CD4-positive, alpha-beta memory T cell (primary cell): ENCODE measurements at regions of chr12 and their contacts with region 1.

Region 1: GRCh38 chr12:55188974-55189556 is 31.8 kb upstream of the OR10A7 start:
- DNase-seq: peak; percentile 51 to 63 (median 55)
- H3K4me3 ChIP-seq: no peak overlapping the region
- H3K4me3 Mint-ChIP-seq: no peak overlapping the region
- H3K27ac ChIP-seq: no peak overlapping the region
- H3K27ac Mint-ChIP-seq: no peak overlapping the region
- H3K4me1 ChIP-seq: no peaks in the 10 kb centered on the region
- H3K4me1 Mint-ChIP-seq: no peaks in the 10 kb centered on the region
- H3K27me3 ChIP-seq: peaks cover 6% of the 10 kb centered on the region
- H3K27me3 Mint-ChIP-seq: peaks cover 15 to 26% of the 10 kb centered on the region in 2 donors

Region 2: DNA sequence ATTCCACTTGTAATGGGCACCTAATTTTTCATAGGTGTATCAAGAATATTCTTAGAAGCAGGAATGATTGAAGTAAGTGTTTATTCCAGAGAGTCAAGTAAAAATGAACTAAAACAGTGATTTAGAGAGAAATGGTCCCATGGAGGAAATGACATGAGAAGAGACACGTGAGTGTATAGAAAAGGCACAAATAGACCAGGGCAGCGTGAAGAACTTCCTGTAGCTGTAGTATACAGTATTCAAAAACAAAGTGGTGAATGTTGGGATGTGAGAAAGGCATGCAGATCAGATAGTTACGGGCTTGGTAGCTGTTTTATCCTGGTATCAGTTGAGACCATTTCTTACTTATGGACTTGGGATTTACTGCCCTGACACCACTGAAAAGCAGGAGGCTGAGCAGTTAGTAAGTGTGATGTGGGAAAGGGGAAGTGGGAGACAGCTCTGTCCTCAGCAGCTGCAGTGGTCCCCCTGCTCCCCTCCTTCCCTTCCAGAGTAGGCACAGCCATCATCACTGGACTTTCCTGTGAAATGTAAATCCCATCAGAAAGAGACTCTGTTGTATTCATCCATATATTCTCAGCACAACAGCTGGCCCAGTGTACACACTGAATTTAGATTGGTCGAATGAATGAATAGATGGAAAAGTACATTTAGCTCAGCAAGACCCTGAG is 187.7 kb before region 1 on chr12:
- CTCF ChIA-PET with region 1: no interaction called
- POLR2A ChIA-PET with region 1: no interaction called
- intact Hi-C with region 1: no loop called
- DNase-seq: no peak
- H3K4me3 ChIP-seq: no peak overlapping the region
- H3K4me3 Mint-ChIP-seq: peak overlapping the region in 1 of 8 donors; percentile 24
- H3K27ac ChIP-seq: no peak overlapping the region
- H3K27ac Mint-ChIP-seq: peak overlapping the region in 4 of 7 donors; percentile 10 to 81 (median 22)
- H3K4me1 ChIP-seq: peaks cover 6% of the 10 kb centered on the region
- H3K4me1 Mint-ChIP-seq: peaks cover 6 to 17% (median 8%) of the 10 kb centered on the region in 4 donors
- H3K27me3 ChIP-seq: no peaks in the 10 kb centered on the region
- H3K27me3 Mint-ChIP-seq: no peaks in the 10 kb centered on the region

Region 3: GRCh38 chr12:55132816-55133215 is 56.2 kb before region 1 on chr12:
- CTCF ChIA-PET with region 1: no interaction called
- POLR2A ChIA-PET with region 1: no interaction called
- intact Hi-C with region 1: no loop called
- DNase-seq: no peak
- H3K4me3 ChIP-seq: no peak overlapping the region
- H3K4me3 Mint-ChIP-seq: no peak overlapping the region
- H3K27ac ChIP-seq: no peak overlapping the region
- H3K27ac Mint-ChIP-seq: no peak overlapping the region
- H3K4me1 ChIP-seq: no peaks in the 10 kb centered on the region
- H3K4me1 Mint-ChIP-seq: no peaks in the 10 kb centered on the region
- H3K27me3 ChIP-seq: peaks cover 11% of the 10 kb centered on the region
- H3K27me3 Mint-ChIP-seq: peaks cover 29 to 36% of the 10 kb centered on the region in 2 donors

Region 4: DNA sequence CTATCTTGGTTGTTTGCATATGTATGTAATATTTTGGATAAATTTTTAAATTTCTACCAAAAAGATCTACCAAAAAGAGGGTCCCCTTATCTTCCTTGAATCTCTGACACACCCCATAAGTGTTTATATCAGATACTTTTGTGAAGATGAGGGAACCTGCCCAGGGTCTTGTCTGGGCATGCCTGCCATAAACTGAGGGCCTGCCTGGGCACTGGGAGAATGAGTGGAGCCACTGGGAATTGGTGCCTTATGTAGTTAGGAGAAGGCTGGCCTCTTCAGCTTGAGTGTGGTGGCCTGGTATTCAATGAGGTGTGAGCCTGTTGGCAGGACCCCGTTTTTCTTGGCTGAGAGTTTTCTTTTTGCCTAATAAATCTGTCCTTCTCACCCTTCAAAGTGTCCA is 16.4 kb before region 1 on chr12:
- CTCF ChIA-PET with region 1: no interaction called
- POLR2A ChIA-PET with region 1: no interaction called
- intact Hi-C with region 1: no loop called
- DNase-seq: no peak
- H3K4me3 ChIP-seq: no peak overlapping the region
- H3K4me3 Mint-ChIP-seq: no peak overlapping the region
- H3K27ac ChIP-seq: no peak overlapping the region
- H3K27ac Mint-ChIP-seq: no peak overlapping the region
- H3K4me1 ChIP-seq: no peaks in the 10 kb centered on the region
- H3K4me1 Mint-ChIP-seq: no peaks in the 10 kb centered on the region
- H3K27me3 ChIP-seq: no peaks in the 10 kb centered on the region
- H3K27me3 Mint-ChIP-seq: peaks cover 7 to 10% of the 10 kb centered on the region in 2 donors

Region 5: DNA sequence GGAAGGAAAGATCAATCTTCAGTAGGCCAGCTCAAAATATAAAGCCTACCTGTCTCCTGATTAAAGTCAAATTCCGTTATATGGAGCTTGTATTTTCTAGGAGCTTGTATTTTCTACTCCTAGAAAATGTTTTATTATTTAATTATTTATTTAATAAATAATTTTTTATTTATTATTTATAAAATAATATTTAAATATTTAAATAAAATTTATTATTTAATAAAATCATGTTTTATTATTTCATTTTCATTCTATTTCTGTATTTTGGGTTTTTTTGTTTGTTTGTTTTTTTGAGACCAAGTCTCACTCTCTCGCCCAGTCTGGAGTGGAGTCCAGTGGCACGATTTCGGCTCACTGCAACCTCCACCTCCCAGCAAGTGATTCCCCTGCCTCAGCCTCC is 183.5 kb after region 1 on chr12:
- CTCF ChIA-PET with region 1: no interaction called
- POLR2A ChIA-PET with region 1: no interaction called
- intact Hi-C with region 1: no loop called
- DNase-seq: no peak
- H3K4me3 ChIP-seq: no peak overlapping the region
- H3K4me3 Mint-ChIP-seq: no peak overlapping the region
- H3K27ac ChIP-seq: no peak overlapping the region
- H3K27ac Mint-ChIP-seq: no peak overlapping the region
- H3K4me1 ChIP-seq: no peaks in the 10 kb centered on the region
- H3K4me1 Mint-ChIP-seq: no peaks in the 10 kb centered on the region
- H3K27me3 ChIP-seq: no peaks in the 10 kb centered on the region
- H3K27me3 Mint-ChIP-seq: peaks cover 3 to 11% of the 10 kb centered on the region in 2 donors

Region 6: DNA sequence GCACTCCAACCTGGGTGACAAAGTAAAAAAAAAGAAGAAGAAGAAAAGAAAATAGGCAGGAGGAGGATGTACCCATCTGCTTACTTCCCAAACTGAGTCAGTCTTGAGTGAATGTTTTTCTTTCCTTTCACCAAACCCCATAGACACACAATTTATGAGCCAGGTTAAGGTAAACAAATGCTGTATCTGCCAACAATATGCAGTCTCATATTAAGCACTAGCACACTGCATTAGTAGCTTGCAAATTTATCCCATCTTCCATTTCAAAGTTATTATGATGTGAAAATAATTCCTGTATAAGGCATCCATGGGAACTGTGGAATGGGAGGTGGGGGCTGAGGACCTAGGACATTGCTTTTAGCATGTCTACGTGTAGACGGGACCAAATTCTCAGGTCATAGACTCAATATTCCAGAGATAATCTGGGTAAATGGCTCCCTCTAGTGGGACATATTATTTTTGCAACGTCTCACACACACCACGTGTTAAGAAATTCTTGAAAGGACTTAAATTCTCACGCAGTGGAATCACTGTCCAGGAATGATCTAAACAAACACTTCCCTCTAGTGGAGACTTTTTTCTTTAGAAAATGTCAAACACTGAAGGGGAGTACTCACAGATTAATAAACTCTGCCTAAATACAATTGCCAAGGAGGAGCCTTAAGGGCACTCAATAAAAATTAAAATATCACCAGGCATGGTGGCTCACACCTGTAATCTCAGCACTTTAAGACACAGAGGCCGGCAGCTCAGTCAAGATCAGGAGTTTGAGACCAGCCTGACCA is 430.5 kb after region 1 on chr12:
- CTCF ChIA-PET with region 1: interaction called, 13 read pairs
- POLR2A ChIA-PET with region 1: no interaction called
- intact Hi-C with region 1: no loop called
- DNase-seq: peak; percentile 56 to 70 (median 67)
- H3K4me3 ChIP-seq: no peak overlapping the region
- H3K4me3 Mint-ChIP-seq: peak overlapping the region in 1 of 8 donors; percentile 38
- H3K27ac ChIP-seq: no peak overlapping the region
- H3K27ac Mint-ChIP-seq: no peak overlapping the region
- H3K4me1 ChIP-seq: no peaks in the 10 kb centered on the region
- H3K4me1 Mint-ChIP-seq: peaks cover 0 to 5% (median 2%) of the 10 kb centered on the region in 4 donors
- H3K27me3 ChIP-seq: no peaks in the 10 kb centered on the region
- H3K27me3 Mint-ChIP-seq: peaks cover 24 to 25% of the 10 kb centered on the region in 2 donors